Natural killer cell (primary cell): ENCODE measurements at regions of chr1 and their contacts with region 1.

Region 1: GRCh38 chr1:162548170-162548569 is 13.4 kb upstream of the UAP1 start:
- DNase-seq: peak; percentile 51 to 53
- ATAC-seq: peak; percentile 94 to 99 (median 95)
- H3K4me3 ChIP-seq: no peak overlapping the region
- H3K4me3 Mint-ChIP-seq: peak overlapping the region; percentile 83
- H3K27ac ChIP-seq: peak overlapping the region; percentile 92
- H3K27ac Mint-ChIP-seq: peak overlapping the region; percentile 95 to 96
- H3K4me1 ChIP-seq: peaks cover 21% of the 10 kb centered on the region
- H3K4me1 Mint-ChIP-seq: peaks cover 27 to 32% of the 10 kb centered on the region in 2 donors
- H3K27me3 ChIP-seq: no peaks in the 10 kb centered on the region
- H3K27me3 Mint-ChIP-seq: no peaks in the 10 kb centered on the region
- CTCF ChIP-seq: no peak

Region 2: DNA sequence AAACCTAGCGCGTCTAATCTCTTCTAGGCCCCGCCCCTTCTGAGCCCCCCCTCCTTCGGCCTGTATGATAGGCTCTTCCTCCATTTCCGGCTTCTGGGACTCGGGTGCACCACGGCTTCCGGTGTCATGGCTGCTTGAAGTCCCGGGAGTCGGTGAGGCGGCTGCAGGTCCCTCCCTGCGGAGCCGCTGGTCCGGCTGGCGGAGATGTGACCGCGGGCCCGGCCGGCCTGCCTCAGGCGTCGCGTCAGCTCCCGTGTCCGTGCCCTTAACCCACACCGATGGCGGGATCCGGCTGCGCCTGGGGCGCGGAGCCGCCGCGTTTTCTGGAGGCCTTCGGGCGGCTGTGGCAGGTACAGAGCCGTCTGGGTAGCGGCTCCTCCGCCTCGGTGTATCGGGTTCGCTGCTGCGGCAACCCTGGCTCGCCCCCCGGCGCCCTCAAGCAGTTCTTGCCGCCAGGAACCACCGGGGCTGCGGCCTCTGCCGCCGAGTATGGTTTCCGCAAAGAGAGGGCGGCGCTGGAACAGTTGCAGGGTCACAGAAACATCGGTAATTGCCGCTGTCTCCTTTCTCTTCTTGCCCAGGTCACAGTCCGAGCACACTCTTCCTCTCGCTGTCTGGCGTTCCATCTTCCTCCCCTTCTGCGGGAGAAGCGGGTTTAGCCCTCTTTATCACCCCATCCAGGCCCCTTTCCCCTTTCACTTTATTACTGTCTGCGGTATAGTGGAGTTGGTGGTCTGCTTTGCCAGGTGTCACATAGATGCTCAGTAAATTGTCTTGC is 50.3 kb before region 1 on chr1 and contains the start of gene UHMK1:
- intact Hi-C with region 1: loop called (anchors 1 kb)
- DNase-seq: peak; percentile 80 to 95
- ATAC-seq: peak; percentile 97 to 98 (median 97)
- H3K4me3 ChIP-seq: peak within 1 kb of the TSS; percentile 65
- H3K4me3 Mint-ChIP-seq: peak within 1 kb of the TSS; percentile 93
- H3K27ac ChIP-seq: peak within 1 kb of the TSS; percentile 91
- H3K27ac Mint-ChIP-seq: peak within 1 kb of the TSS; percentile 88 to 96
- H3K4me1 ChIP-seq: peaks cover 13% of the 10 kb centered on the region
- H3K4me1 Mint-ChIP-seq: peaks cover 33 to 38% of the 10 kb centered on the region in 2 donors
- H3K27me3 ChIP-seq: no peaks in the 10 kb centered on the region
- H3K27me3 Mint-ChIP-seq: peaks cover 4 to 6% of the 10 kb centered on the region in 2 donors
- CTCF ChIP-seq: no peak
- total RNA-seq, gene UHMK1: 87.7 to 100 (median 99.1) TPM

Region 3: DNA sequence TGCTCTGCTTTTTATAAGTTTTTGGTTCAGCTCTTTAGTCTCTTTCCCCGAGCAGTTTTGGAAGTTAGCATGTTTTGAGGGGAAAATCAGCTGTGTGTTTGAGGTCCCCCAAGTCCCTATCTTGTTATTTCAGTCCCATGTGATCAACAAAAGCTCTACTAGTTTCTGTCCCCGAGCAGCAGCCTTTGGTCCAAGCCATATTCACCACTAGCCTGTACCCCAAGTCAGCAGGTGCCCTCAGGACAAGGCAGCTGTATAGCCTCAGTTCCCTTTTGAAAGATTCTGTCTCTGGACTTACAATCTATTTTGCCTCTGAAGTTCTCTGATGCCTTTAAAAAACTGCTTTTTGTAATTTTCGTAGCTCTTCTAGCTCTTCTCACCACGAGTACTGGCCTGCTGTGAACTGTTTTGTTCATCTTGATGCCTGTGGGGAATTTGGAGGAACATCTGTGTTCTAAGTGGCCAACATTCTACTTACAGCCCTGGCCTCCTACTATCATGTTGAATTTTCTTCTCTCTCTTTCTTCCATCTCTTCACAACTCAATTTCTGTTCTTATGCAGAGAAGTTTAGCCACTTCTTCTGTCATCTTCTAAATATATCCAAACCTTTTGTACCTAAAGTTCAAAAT is 30.0 kb after region 1 on chr1:
- intact Hi-C with region 1: no loop called
- DNase-seq: no peak
- ATAC-seq: no peak
- H3K4me3 ChIP-seq: no peak overlapping the region
- H3K4me3 Mint-ChIP-seq: no peak overlapping the region
- H3K27ac ChIP-seq: no peak overlapping the region
- H3K27ac Mint-ChIP-seq: no peak overlapping the region
- H3K4me1 ChIP-seq: no peaks in the 10 kb centered on the region
- H3K4me1 Mint-ChIP-seq: peaks cover 10 to 11% of the 10 kb centered on the region in 2 donors
- H3K27me3 ChIP-seq: no peaks in the 10 kb centered on the region
- H3K27me3 Mint-ChIP-seq: no peaks in the 10 kb centered on the region
- CTCF ChIP-seq: no peak